Mammary epithelial cell (primary cell): ENCODE measurements at regions of chr9 and their contacts with region 1.

Region 1: GRCh38 chr9:121331992-121332685 is 37.9 kb downstream of the STOM start:
- DNase-seq: no peak
- H3K4me3 ChIP-seq: no peak overlapping the region
- H3K27ac ChIP-seq: no peak overlapping the region
- H3K4me1 ChIP-seq: peaks cover 22% of the 10 kb centered on the region
- H3K27me3 ChIP-seq: no peaks in the 10 kb centered on the region
- CTCF ChIP-seq: peak in 1 of 2 donors; percentile 30

Region 2: GRCh38 chr9:121038804-121039203 is 293.3 kb before region 1 on chr9:
- CTCF ChIA-PET with region 1: no interaction called
- dilution Hi-C with region 1: no loop called
- in situ Hi-C with region 1: no loop called
- intact Hi-C with region 1: no loop called
- DNase-seq: no peak
- H3K4me3 ChIP-seq: no peak overlapping the region
- H3K27ac ChIP-seq: no peak overlapping the region
- H3K4me1 ChIP-seq: peaks cover 3% of the 10 kb centered on the region
- H3K27me3 ChIP-seq: no peaks in the 10 kb centered on the region
- CTCF ChIP-seq: no peak

Region 3: DNA sequence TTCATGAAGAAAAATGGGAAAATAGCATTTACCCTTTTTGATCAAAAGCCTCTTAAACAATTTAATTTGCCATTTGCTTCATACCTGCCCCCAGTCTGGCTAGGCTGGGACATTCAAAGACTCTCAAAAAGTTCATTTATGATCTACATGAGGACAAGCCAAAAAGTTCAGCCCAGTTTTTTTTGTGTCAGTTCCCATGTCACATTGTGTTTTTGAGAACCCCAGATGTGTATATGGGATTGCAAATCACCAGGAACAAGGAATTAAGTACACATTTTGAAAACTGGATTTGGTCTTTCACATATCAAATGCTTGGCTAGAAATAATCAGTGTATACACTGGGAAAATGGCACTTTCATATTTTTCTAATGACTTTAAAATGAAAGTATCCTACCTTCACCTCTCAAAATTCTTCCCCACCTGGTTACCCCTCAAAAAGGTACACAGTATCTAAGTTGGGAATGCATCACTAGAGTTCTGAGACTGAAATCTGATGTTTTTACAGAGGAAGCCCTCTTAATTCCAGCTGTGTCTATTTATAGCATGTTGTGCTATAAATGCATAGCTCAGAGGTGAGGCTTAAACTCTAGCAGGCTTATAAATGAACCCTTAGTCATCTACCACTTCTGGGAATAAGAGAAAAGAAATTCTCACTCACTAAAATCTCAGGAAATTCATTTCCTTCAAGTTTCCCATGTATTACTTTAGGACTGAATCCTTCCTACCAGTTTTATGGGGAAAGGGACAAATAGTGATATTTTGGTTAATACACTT is 28.6 kb after region 1 on chr9:
- CTCF ChIA-PET with region 1: interaction called, 24 read pairs
- dilution Hi-C with region 1: no loop called
- in situ Hi-C with region 1: no loop called
- intact Hi-C with region 1: no loop called
- DNase-seq: peak; percentile 51
- H3K4me3 ChIP-seq: no peak overlapping the region
- H3K27ac ChIP-seq: peak overlapping the region; percentile 52
- H3K4me1 ChIP-seq: peaks cover 39% of the 10 kb centered on the region
- H3K27me3 ChIP-seq: no peaks in the 10 kb centered on the region
- CTCF ChIP-seq: no peak

Region 4: GRCh38 chr9:121376214-121376830 is 44.2 kb after region 1 on chr9:
- CTCF ChIA-PET with region 1: interaction called, 10 read pairs
- dilution Hi-C with region 1: no loop called
- in situ Hi-C with region 1: loop called in 1 of 2 experiments (anchors 10 kb)
- intact Hi-C with region 1: no loop called
- DNase-seq: no peak
- H3K4me3 ChIP-seq: no peak overlapping the region
- H3K27ac ChIP-seq: no peak overlapping the region
- H3K4me1 ChIP-seq: peaks cover 39% of the 10 kb centered on the region
- H3K27me3 ChIP-seq: no peaks in the 10 kb centered on the region
- CTCF ChIP-seq: peak; percentile 12 to 51